ENCODE measurements at regions of chr18 and their contacts with region 1.

Region 1: DNA sequence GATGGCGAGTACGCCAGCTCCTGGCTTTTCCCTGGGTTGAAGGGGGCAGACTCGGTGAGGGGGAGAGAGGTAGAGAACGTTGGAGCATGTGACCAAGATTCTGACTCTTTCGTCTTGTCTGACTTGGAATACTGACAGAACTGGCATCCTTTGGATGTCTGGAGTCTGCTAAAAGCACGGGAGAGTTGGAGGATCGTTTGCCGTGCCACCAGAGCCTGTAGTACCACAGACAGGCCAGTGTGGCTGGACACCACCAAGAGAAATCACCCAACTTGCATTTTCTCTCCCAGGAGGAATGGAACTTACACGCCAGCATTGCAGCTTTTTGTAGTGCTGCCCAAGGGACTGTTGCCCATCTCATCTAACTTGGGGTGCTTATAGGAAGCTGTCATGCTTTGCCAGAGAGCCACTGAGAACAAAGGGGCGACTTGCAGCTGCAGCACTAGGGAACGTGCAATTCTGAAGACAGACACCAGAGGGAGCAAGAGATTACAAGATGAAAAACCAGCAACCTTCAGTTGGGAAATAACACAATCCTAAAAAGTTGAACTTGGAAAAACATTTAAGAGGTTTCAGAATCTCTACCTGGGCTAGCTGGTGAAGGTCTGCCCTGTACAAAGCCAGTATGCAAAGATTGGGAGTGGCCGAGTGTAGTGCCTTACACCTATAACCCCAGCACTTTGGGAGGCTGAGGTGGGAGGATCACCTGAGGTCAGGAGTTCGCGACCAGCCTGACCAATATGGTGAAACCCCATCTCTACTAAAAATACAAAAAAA is 24.1 kb downstream of the PSMG2 start:
- DNase-seq: peak; percentile 46 to 68
- H3K4me3 ChIP-seq: no peak overlapping the region
- H3K27ac ChIP-seq: no peak overlapping the region
- H3K4me1 ChIP-seq: peaks cover 17% of the 10 kb centered on the region
- H3K27me3 ChIP-seq: no peaks in the 10 kb centered on the region
- CTCF ChIP-seq: peak; percentile 97

Region 2: GRCh38 chr18:12768625-12769024 is 41.7 kb after region 1 on chr18:
- CTCF ChIA-PET with region 1: no interaction called
- POLR2A ChIA-PET with region 1: no interaction called
- intact Hi-C with region 1: no loop called
- DNase-seq: peak in 1 of 2 experiments; percentile 36
- H3K4me3 ChIP-seq: no peak overlapping the region
- H3K27ac ChIP-seq: no peak overlapping the region
- H3K4me1 ChIP-seq: no peaks in the 10 kb centered on the region
- H3K27me3 ChIP-seq: no peaks in the 10 kb centered on the region
- CTCF ChIP-seq: no peak

Region 3: DNA sequence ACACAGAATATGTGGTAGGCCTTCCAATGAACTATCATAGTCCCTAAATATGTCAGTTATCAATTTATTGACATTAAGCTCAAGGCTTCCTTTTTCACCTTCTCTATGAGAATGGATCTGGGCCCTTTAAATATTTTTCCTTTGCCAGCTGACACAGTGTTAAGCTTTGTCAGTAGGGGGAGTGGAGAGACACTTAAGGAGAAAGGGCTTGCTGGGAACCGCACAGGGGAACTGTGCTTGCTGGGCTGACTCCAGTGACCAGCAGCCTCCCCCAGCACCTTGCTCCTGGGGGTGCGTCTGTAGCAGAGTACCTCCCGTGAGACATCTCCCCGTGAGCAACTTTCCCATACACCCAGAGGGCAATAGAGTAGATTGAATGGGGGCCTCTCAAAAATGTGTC is 163.5 kb after region 1 on chr18:
- CTCF ChIA-PET with region 1: interaction called, 4 read pairs
- POLR2A ChIA-PET with region 1: no interaction called
- intact Hi-C with region 1: loop called (anchors 2 kb)
- DNase-seq: peak; percentile 22 to 59
- H3K4me3 ChIP-seq: peak overlapping the region; percentile 6; the same call in 1 of the 2 replicates
- H3K27ac ChIP-seq: peak overlapping the region; percentile 95
- H3K4me1 ChIP-seq: peaks cover 41% of the 10 kb centered on the region
- H3K27me3 ChIP-seq: no peaks in the 10 kb centered on the region
- CTCF ChIP-seq: peak; percentile 45; the same call in 1 of the 2 replicates

Region 4: GRCh38 chr18:13159579-13159978 is 432.6 kb after region 1 on chr18:
- CTCF ChIA-PET with region 1: no interaction called
- POLR2A ChIA-PET with region 1: no interaction called
- intact Hi-C with region 1: loop called (anchors 1 kb)
- DNase-seq: peak in 1 of 2 experiments; percentile 39
- H3K4me3 ChIP-seq: no peak overlapping the region
- H3K27ac ChIP-seq: no peak overlapping the region
- H3K4me1 ChIP-seq: no peaks in the 10 kb centered on the region
- H3K27me3 ChIP-seq: peaks cover 17% of the 10 kb centered on the region; the same call in 1 of the 2 replicates
- CTCF ChIP-seq: peak; percentile 92

Region 5: GRCh38 chr18:13481820-13482617 is 755.1 kb after region 1 on chr18:
- CTCF ChIA-PET with region 1: no interaction called
- POLR2A ChIA-PET with region 1: no interaction called
- intact Hi-C with region 1: no loop called
- DNase-seq: no peak
- H3K4me3 ChIP-seq: no peak overlapping the region
- H3K27ac ChIP-seq: no peak overlapping the region
- H3K4me1 ChIP-seq: no peaks in the 10 kb centered on the region
- H3K27me3 ChIP-seq: peaks cover 99% of the 10 kb centered on the region
- CTCF ChIP-seq: no peak

Measured in PC-9 (cell line).